Testis (tissue), 5 donors: ENCODE measurements at regions of chr6 and their contacts with region 1.

Region 1: GRCh38 chr6:160926868-160927291 is 64.7 kb upstream of the MAP3K4 start:
- DNase-seq: no peak
- H3K4me3 ChIP-seq: no peak overlapping the region
- H3K27ac ChIP-seq: no peak overlapping the region
- H3K4me1 ChIP-seq: no peaks in the 10 kb centered on the region
- H3K27me3 ChIP-seq: no peaks in the 10 kb centered on the region
- CTCF ChIP-seq: no peak
- POLR2A ChIP-seq: no peak

Region 2: DNA sequence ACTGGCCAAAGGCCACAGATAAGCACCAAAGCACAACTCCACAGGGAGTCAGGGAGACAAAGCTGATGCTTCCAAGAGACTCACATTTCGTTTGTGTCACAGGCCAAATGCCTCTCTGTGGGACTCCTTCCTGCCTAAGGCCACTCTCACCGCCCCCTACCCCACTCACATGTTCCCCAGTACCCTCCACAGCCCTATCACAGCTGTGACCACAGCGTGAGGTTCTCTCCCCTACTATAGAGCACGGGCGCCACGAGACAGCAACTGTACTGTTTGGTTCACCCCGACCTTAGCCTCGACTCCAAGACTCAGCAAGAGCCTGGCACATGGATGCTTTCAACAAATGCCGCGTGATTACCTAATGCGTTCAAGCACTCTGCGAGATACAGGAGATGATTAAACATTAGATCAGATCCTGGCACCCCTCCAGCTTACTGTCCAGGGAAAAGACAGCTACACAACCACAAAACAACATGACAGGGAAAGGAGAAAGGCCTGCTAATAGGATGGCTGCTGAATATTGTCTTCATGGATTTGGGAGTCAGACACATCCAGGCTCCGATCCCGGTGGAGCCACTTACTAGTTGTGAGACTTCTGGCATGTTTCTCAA is 241.5 kb after region 1 on chr6:
- intact Hi-C with region 1: no loop called
- DNase-seq: no peak
- H3K4me3 ChIP-seq: no peak overlapping the region
- H3K27ac ChIP-seq: no peak overlapping the region
- H3K4me1 ChIP-seq: no peaks in the 10 kb centered on the region
- H3K27me3 ChIP-seq: no peaks in the 10 kb centered on the region
- CTCF ChIP-seq: no peak
- POLR2A ChIP-seq: no peak

Region 3: GRCh38 chr6:161228921-161229591 is 302.2 kb after region 1 on chr6:
- intact Hi-C with region 1: no loop called
- DNase-seq: no peak
- H3K4me3 ChIP-seq: no peak overlapping the region
- H3K27ac ChIP-seq: no peak overlapping the region
- H3K4me1 ChIP-seq: peaks cover 12% of the 10 kb centered on the region
- H3K27me3 ChIP-seq: no peaks in the 10 kb centered on the region
- CTCF ChIP-seq: no peak
- POLR2A ChIP-seq: no peak

Region 4: GRCh38 chr6:161370880-161371279 is 444.0 kb after region 1 on chr6:
- intact Hi-C with region 1: loop called (anchors 5 kb)
- DNase-seq: peak; percentile 73
- H3K4me3 ChIP-seq: no peak overlapping the region
- H3K27ac ChIP-seq: no peak overlapping the region
- H3K4me1 ChIP-seq: no peaks in the 10 kb centered on the region
- H3K27me3 ChIP-seq: no peaks in the 10 kb centered on the region
- CTCF ChIP-seq: peak; percentile 73 to 85 (median 80)
- POLR2A ChIP-seq: no peak